Right cardiac atrium (tissue), 5 donors: ENCODE measurements at regions of chr7 and their contacts with region 1.

Region 1: GRCh38 chr7:41503438-41503837 is 199.5 kb downstream of the INHBA start:
- DNase-seq: no peak
- ATAC-seq: no peak
- H3K4me3 ChIP-seq: no peak overlapping the region
- H3K27ac ChIP-seq: no peak overlapping the region
- H3K4me1 ChIP-seq: no peaks in the 10 kb centered on the region
- H3K27me3 ChIP-seq: no peaks in the 10 kb centered on the region

Region 2: DNA sequence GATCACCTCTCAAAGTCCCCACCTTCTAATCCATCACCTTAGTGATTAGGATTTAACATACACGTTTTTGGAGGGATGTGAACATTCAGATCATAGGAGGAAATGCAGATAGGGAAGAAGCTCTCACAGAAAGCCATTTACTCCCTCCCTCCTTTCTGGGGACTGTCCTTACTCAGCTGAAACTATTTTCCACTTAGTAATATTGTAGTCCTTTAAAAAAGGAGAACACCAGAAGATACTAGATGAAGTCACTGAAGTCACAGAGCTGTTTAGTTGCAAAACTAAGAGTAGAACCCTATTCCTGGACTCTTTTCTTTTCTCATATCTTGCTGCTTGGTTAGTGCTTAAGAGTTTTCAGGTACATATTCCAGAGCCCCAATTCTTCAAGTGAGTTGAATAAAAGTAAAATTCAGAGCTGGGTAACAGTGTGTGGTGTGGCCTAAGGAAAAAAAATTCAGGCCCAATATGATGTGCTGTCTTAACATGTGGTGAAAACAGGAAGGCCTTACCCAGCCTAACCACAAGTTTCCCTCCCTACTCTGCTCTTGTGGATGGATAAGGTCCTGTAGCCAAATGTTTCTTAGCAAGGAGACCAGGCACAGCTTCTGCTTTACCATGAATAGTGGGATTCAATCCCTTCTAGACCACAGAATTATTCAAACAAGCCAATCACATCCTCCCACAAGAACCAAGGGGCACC is 63.7 kb after region 1 on chr7:
- intact Hi-C with region 1: loop called in 1 of 4 experiments (anchors 10 kb)
- DNase-seq: no peak
- ATAC-seq: no peak
- H3K4me3 ChIP-seq: no peak overlapping the region
- H3K27ac ChIP-seq: no peak overlapping the region
- H3K4me1 ChIP-seq: no peaks in the 10 kb centered on the region
- H3K27me3 ChIP-seq: no peaks in the 10 kb centered on the region

Region 3: DNA sequence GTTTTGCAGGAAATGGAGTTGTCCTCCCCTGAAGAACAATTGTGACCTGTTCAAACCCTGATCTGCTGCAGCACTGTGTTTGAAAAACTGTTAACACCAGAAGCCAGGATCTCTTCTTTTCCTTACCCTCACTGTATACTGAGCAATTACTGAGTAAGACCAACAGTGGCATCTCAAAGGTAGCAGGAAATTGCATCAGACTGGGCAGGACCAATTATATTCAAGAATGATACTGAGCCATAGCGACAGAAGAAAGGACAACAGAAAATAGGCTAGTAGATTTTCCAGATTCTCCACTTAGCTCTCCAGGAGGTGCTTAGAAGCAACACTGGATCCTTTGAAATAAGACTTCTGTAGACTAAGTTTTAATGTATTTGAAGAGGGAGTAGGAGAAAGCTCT is 256.9 kb after region 1 on chr7:
- intact Hi-C with region 1: no loop called
- DNase-seq: no peak
- ATAC-seq: no peak
- H3K4me3 ChIP-seq: no peak overlapping the region
- H3K27ac ChIP-seq: no peak overlapping the region
- H3K4me1 ChIP-seq: no peaks in the 10 kb centered on the region
- H3K27me3 ChIP-seq: no peaks in the 10 kb centered on the region

Region 4: GRCh38 chr7:41816111-41816510 is 312.7 kb after region 1 on chr7:
- intact Hi-C with region 1: no loop called
- DNase-seq: no peak
- ATAC-seq: no peak
- H3K4me3 ChIP-seq: no peak overlapping the region
- H3K27ac ChIP-seq: no peak overlapping the region
- H3K4me1 ChIP-seq: no peaks in the 10 kb centered on the region
- H3K27me3 ChIP-seq: no peaks in the 10 kb centered on the region